CD8-positive, alpha-beta T cell (primary cell): ENCODE measurements at regions of chr3 and their contacts with region 1.

Region 1: GRCh38 chr3:59998058-59998457 is 948.2 kb upstream of the CFAP20DC start:
- DNase-seq: no peak
- ATAC-seq: no peak
- H3K4me3 ChIP-seq: no peak overlapping the region
- H3K4me3 Mint-ChIP-seq: no peak overlapping the region
- H3K27ac ChIP-seq: no peak overlapping the region
- H3K27ac Mint-ChIP-seq: no peak overlapping the region
- H3K4me1 ChIP-seq: peaks cover 51% of the 10 kb centered on the region
- H3K4me1 Mint-ChIP-seq: peaks cover 65% of the 10 kb centered on the region
- H3K27me3 ChIP-seq: no peaks in the 10 kb centered on the region
- H3K27me3 Mint-ChIP-seq: no peaks in the 10 kb centered on the region
- CTCF ChIP-seq: no peak

Region 2: GRCh38 chr3:60202052-60202726 is 204.1 kb after region 1 on chr3:
- CTCF ChIA-PET with region 1: no interaction called
- POLR2A ChIA-PET with region 1: no interaction called
- intact Hi-C with region 1: no loop called
- DNase-seq: no peak
- ATAC-seq: no peak
- H3K4me3 ChIP-seq: no peak overlapping the region
- H3K4me3 Mint-ChIP-seq: no peak overlapping the region
- H3K27ac ChIP-seq: no peak overlapping the region
- H3K27ac Mint-ChIP-seq: no peak overlapping the region
- H3K4me1 ChIP-seq: no peaks in the 10 kb centered on the region
- H3K4me1 Mint-ChIP-seq: no peaks in the 10 kb centered on the region
- H3K27me3 ChIP-seq: no peaks in the 10 kb centered on the region
- H3K27me3 Mint-ChIP-seq: no peaks in the 10 kb centered on the region
- CTCF ChIP-seq: no peak

Region 3: DNA sequence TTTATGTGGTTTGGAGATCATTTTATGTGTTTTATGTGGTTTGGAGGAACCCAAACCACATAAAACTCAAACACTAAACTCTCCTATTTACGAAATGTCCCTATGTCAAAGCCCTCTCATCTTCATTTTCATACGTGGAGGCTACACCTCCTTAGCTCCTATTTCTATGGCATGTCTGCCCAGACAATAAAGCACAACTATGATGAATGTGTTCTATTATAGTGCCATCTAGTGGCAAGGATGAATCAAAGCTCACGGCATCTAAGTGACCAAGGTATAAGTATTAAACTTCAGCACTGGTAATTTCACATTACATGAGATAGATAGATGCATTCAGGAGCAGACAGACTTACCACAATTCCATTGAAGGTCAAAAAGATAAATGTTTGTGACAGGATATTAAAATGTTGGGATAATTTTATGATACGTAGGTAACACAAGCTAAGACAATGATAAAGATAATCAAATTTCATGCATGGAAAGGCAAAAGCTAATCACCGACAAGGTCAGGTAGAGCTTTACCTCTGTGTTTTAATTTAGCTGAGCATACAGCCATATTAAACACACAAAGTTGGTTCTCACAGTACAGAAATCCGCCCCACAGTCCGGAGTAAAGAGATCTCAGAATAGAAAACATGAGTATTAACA is 1383.8 kb after region 1 on chr3:
- CTCF ChIA-PET with region 1: interaction called, 3 read pairs
- POLR2A ChIA-PET with region 1: no interaction called
- intact Hi-C with region 1: loop called in 1 of 2 experiments (anchors 10 kb)
- DNase-seq: peak in 2 of 9 experiments; percentile 28 to 49
- ATAC-seq: no peak
- H3K4me3 ChIP-seq: no peak overlapping the region
- H3K4me3 Mint-ChIP-seq: no peak overlapping the region
- H3K27ac ChIP-seq: no peak overlapping the region
- H3K27ac Mint-ChIP-seq: no peak overlapping the region
- H3K4me1 ChIP-seq: no peaks in the 10 kb centered on the region
- H3K4me1 Mint-ChIP-seq: peaks cover 3% of the 10 kb centered on the region
- H3K27me3 ChIP-seq: peaks cover 0 to 2% of the 10 kb centered on the region in 2 experiments
- H3K27me3 Mint-ChIP-seq: peaks cover 13% of the 10 kb centered on the region
- CTCF ChIP-seq: peak; percentile 65